Spleen (tissue), 13 donors: ENCODE measurements at regions of chr3 and their contacts with region 1.

Region 1: DNA sequence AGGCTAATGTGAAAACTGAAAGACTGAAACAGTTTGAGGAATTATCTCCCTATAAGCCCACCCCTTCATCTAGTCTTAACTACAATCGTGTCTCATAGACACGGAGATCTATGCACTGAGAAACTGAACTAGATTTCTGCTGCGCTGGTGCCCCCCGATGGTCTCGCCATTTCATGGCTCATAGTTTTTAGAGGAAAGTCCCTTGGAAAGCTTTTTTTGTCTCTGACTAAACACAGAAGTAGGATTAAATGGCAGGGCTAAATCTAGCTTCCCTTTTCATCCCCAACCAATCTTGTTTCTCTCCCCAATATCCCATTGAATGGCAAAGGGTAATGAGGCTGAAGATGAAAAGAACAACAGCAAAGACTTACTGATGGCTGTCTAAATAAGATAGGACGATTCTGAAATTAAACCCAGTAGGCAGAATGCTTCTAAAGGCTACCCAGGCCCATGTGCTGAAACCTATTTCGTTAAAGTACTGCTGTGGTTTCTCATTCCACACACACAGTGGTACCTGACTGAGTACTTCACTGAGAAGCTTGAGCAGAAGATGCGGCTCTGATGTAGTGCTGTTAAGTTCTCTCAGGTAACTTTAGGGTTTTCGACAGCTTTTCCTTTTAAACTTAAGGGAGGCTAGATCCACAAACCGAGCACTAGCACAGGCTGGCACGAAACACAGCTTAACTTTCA is 142.7 kb downstream of the GADL1 start:
- DNase-seq: peak; percentile 58
- H3K4me3 ChIP-seq: no peak overlapping the region
- H3K27ac ChIP-seq: no peak overlapping the region
- H3K4me1 ChIP-seq: peaks cover 0 to 24% (median 0%) of the 10 kb centered on the region in 6 donors
- H3K27me3 ChIP-seq: no peaks in the 10 kb centered on the region
- CTCF ChIP-seq: peak in 7 of 11 experiments; percentile 12 to 42 (median 31)
- POLR2A ChIP-seq: no peak

Region 2: DNA sequence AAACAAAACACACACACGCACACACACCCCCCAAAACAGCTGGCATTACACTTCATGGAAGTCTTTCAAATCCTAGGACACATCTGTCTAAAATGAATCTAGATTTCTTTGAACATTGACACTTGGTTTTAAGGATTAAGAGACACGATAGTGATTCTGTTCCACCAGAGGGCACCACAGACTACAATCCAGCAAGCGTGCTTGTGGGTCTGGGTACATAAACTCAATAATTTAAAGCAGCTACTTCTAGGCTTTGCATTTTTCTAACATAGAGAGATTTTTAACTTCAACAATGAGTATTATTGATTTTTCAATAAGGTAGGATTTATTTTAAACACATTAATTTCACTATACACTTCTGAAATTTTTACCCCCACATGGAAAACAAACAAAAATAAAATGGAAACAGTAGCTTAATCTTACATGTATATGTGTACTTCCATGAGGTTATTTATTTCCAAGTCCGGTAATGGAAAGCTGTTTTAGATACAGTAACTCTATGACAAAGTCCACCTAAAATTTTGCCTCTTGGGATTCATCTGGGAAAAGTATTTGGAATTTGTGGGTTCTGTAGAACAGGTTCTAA is 709.4 kb before region 1 on chr3:
- intact Hi-C with region 1: loop called (anchors 10 kb)
- DNase-seq: no peak
- H3K4me3 ChIP-seq: no peak overlapping the region
- H3K27ac ChIP-seq: no peak overlapping the region
- H3K4me1 ChIP-seq: peaks cover 0 to 8% (median 2%) of the 10 kb centered on the region in 6 donors
- H3K27me3 ChIP-seq: peaks cover 0 to 7% (median 0%) of the 10 kb centered on the region in 7 donors
- CTCF ChIP-seq: peak; percentile 31 to 66 (median 55)
- POLR2A ChIP-seq: no peak

Region 3: GRCh38 chr3:30112902-30113484 is 638.8 kb before region 1 on chr3:
- intact Hi-C with region 1: loop called (anchors 5 kb)
- DNase-seq: no peak
- H3K4me3 ChIP-seq: no peak overlapping the region
- H3K27ac ChIP-seq: no peak overlapping the region
- H3K4me1 ChIP-seq: peaks cover 0 to 11% (median 8%) of the 10 kb centered on the region in 6 donors
- H3K27me3 ChIP-seq: peaks cover 0 to 8% (median 0%) of the 10 kb centered on the region in 7 donors
- CTCF ChIP-seq: peak in 10 of 11 experiments; percentile 23 to 66 (median 54)
- POLR2A ChIP-seq: no peak

Region 4: DNA sequence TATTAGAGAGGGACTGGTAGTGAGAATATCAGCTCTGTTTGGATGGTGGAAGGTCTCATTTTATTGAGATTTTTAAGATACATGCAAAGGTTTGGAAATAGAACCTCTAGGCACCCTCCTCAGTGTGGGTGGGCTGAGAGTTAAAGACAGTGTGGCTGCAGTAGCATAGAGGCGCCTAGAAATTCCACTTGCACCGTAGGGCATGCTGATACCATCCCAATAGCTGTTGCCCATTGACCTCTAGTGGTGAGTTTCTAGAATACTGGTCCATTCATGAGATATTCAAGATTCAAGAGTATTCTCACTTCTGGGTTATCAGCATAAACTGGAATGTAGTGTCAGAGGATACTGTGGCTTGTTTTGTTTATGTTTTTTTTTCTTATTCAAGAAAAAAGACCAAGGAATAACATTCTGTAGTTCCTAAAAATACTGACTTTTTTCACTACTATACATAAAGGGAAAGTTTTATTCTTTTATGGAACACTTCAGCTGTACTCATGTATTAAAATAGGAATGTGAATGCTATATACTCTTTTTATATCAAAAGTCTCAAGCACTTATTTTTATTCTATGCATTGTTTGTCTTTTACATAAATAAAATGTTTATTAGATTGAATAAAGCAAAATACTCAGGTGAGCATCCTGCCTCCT is 58.2 kb before region 1 on chr3:
- intact Hi-C with region 1: no loop called
- DNase-seq: no peak
- H3K4me3 ChIP-seq: no peak overlapping the region
- H3K27ac ChIP-seq: peak overlapping the region in 6 of 8 donors; percentile 74 to 80 (median 75)
- H3K4me1 ChIP-seq: peaks cover 35 to 89% (median 77%) of the 10 kb centered on the region in 6 donors
- H3K27me3 ChIP-seq: no peaks in the 10 kb centered on the region
- CTCF ChIP-seq: peak; percentile 57 to 86 (median 79)
- POLR2A ChIP-seq: no peak

Region 5: GRCh38 chr3:30847592-30847991 is 95.8 kb after region 1 on chr3:
- intact Hi-C with region 1: no loop called
- DNase-seq: no peak
- H3K4me3 ChIP-seq: no peak overlapping the region
- H3K27ac ChIP-seq: peak overlapping the region in 2 of 8 donors; percentile 14 to 51
- H3K4me1 ChIP-seq: peaks cover 0 to 5% (median 0%) of the 10 kb centered on the region in 6 donors
- H3K27me3 ChIP-seq: no peaks in the 10 kb centered on the region
- CTCF ChIP-seq: no peak
- POLR2A ChIP-seq: no peak